CD14-positive monocyte (primary cell): ENCODE measurements at regions of chr5 and their contacts with region 1.

Region 1: GRCh38 chr5:151051066-151051930 is 29.5 kb downstream of the TNIP1 start:
- DNase-seq: peak; percentile 83 to 91 (median 88)
- H3K4me3 ChIP-seq: no peak overlapping the region
- H3K4me3 Mint-ChIP-seq: no peak overlapping the region
- H3K27ac ChIP-seq: peak overlapping the region in 1 of 2 donors; percentile 65
- H3K27ac Mint-ChIP-seq: peak overlapping the region; percentile 70 to 88 (median 79)
- H3K4me1 ChIP-seq: peaks cover 36 to 46% of the 10 kb centered on the region in 2 donors
- H3K4me1 Mint-ChIP-seq: peaks cover 45% of the 10 kb centered on the region
- H3K27me3 ChIP-seq: no peaks in the 10 kb centered on the region
- H3K27me3 Mint-ChIP-seq: no peaks in the 10 kb centered on the region
- CTCF ChIP-seq: peak; percentile 94

Region 2: DNA sequence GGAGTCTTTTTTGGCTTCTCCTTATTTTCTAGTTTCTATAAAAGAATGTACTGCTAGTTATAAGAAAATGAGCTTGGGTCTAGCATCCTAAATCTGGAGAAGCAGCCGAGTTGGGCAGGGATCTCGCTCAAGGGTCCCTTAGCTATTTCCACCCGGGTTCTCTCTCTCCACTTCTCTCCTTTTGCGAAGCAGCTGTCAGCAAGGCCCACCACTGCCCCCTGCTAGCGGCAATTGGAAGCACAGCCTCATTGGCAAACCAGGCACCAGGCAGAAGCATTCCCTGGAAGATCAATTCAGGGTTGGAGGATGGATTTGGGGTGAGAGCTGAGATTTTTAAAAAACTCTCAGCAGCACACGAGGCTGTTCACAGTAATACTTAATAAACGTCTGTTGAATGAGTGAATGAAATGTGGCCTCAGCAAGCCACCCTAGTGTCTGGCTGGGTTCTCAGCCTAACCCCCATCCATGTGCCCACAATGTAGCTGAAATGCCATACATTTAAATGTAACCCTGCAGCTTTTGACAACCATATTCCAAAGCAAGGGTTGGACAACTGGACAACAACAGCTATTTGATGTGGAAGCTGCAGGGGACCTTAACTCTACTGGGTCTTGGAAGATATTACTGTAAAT is 64.1 kb after region 1 on chr5:
- intact Hi-C with region 1: loop called (anchors 1 to 2 kb)
- DNase-seq: peak; percentile 55 to 75 (median 74)
- H3K4me3 ChIP-seq: no peak overlapping the region
- H3K4me3 Mint-ChIP-seq: no peak overlapping the region
- H3K27ac ChIP-seq: peak overlapping the region in 1 of 2 donors; percentile 44
- H3K27ac Mint-ChIP-seq: peak overlapping the region in 1 of 7 donors; percentile 63
- H3K4me1 ChIP-seq: no peaks in the 10 kb centered on the region
- H3K4me1 Mint-ChIP-seq: peaks cover 6% of the 10 kb centered on the region
- H3K27me3 ChIP-seq: no peaks in the 10 kb centered on the region
- H3K27me3 Mint-ChIP-seq: no peaks in the 10 kb centered on the region
- CTCF ChIP-seq: peak; percentile 98

Region 3: GRCh38 chr5:151164686-151165392 is 113.5 kb after region 1 on chr5:
- intact Hi-C with region 1: loop called in 1 of 2 experiments (anchors 2 kb)
- DNase-seq: peak; percentile 69 to 79 (median 74)
- H3K4me3 ChIP-seq: no peak overlapping the region
- H3K4me3 Mint-ChIP-seq: no peak overlapping the region
- H3K27ac ChIP-seq: no peak overlapping the region
- H3K27ac Mint-ChIP-seq: peak overlapping the region in 1 of 7 donors; percentile 44
- H3K4me1 ChIP-seq: peaks cover 7 to 13% of the 10 kb centered on the region in 2 donors
- H3K4me1 Mint-ChIP-seq: peaks cover 15% of the 10 kb centered on the region
- H3K27me3 ChIP-seq: no peaks in the 10 kb centered on the region
- H3K27me3 Mint-ChIP-seq: peaks cover 0 to 2% (median 0%) of the 10 kb centered on the region in 3 donors
- CTCF ChIP-seq: peak; percentile 91

Region 4: GRCh38 chr5:151252762-151253604 is 201.7 kb after region 1 on chr5 and contains the start of gene GM2A:
- intact Hi-C with region 1: loop called (anchors 10 kb)
- DNase-seq: peak; percentile 99 to 100 (median 100)
- H3K4me3 ChIP-seq: peak within 1 kb of the TSS; percentile 78 to 99 (median 81)
- H3K4me3 Mint-ChIP-seq: peak within 1 kb of the TSS; percentile 96 to 99
- H3K27ac ChIP-seq: peak within 1 kb of the TSS; percentile 91 to 94
- H3K27ac Mint-ChIP-seq: peak within 1 kb of the TSS; percentile 95 to 100 (median 97)
- H3K4me1 ChIP-seq: peaks cover 55 to 71% of the 10 kb centered on the region in 2 donors
- H3K4me1 Mint-ChIP-seq: peaks cover 61% of the 10 kb centered on the region
- H3K27me3 ChIP-seq: no peaks in the 10 kb centered on the region
- H3K27me3 Mint-ChIP-seq: peaks cover 0 to 4% (median 0%) of the 10 kb centered on the region in 3 donors
- CTCF ChIP-seq: no peak
- polyA plus RNA-seq, gene GM2A: 22.2 to 57.9 (median 28.0) TPM